Endothelial cell of umbilical vein (primary cell): ENCODE measurements at regions of chr17 and their contacts with region 1.

Region 1: GRCh38 chr17:7219812-7220581 is at the starts of genes ACADVL and DLG4:
- DNase-seq: peak; percentile 85
- H3K4me3 ChIP-seq: peak within 1 kb of the TSS; percentile 51 to 69 (median 61)
- H3K27ac ChIP-seq: peak within 1 kb of the TSS; percentile 71
- H3K4me1 ChIP-seq: peaks cover 29% of the 10 kb centered on the region
- H3K27me3 ChIP-seq: no peaks in the 10 kb centered on the region
- CTCF ChIP-seq: no peak
- POLR2A ChIP-seq: peak; percentile 83
- total RNA-seq, gene ACADVL: 300 and 308 TPM in 2 replicates
- total RNA-seq, gene DLG4: 26.6 and 34.6 TPM in 2 replicates

Region 2: GRCh38 chr17:7035591-7036368 is 184.2 kb before region 1 on chr17 and contains the start of gene SLC16A13:
- CTCF ChIA-PET with region 1: no interaction called
- POLR2A ChIA-PET with region 1: no interaction called
- dilution Hi-C with region 1: no loop called
- intact Hi-C with region 1: no loop called
- DNase-seq: peak; percentile 96
- H3K4me3 ChIP-seq: peak within 1 kb of the TSS; percentile 55 to 76 (median 61)
- H3K27ac ChIP-seq: peak within 1 kb of the TSS; percentile 84
- H3K4me1 ChIP-seq: peaks cover 31% of the 10 kb centered on the region
- H3K27me3 ChIP-seq: no peaks in the 10 kb centered on the region
- CTCF ChIP-seq: no peak
- POLR2A ChIP-seq: no peak
- total RNA-seq, gene SLC16A13: 18.6 and 24.7 TPM in 2 replicates

Region 3: DNA sequence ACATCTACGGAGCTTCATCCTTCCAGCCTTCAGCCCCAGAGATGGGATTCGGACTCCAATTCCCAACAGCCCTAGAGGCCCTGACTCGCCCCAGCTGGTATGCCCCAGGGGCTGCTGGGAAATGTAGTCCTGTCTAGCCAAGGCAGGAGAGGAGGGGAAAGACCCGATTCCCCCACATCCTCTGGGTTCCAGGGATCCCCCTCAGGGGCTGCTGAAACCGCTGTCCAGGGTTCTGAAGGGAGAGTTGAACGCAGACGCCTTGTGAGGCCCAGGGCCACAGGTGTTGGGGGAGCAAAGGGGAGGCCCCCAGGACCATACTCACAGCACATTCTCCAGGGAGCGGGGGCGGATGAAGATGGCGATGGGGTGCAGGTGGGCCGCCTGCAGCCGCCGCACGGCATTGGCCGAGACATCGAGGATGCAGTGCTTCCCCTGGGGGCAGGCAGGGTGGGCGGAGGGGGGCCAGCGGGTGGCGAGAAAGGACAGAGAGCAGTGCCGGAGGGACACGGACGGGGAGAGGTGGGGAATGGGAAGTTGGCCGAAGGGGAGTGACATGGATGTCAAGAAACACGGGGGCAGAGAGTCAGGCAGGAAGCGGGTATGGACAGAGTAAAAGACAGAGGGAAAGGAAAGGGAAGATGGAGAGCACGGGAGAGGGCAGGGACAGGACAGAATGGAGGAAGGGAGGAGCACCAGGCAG is 28.3 kb before region 1 on chr17:
- CTCF ChIA-PET with region 1: no interaction called
- POLR2A ChIA-PET with region 1: no interaction called
- dilution Hi-C with region 1: no loop called
- intact Hi-C with region 1: no loop called
- DNase-seq: no peak
- H3K4me3 ChIP-seq: no peak overlapping the region
- H3K27ac ChIP-seq: no peak overlapping the region
- H3K4me1 ChIP-seq: no peaks in the 10 kb centered on the region
- H3K27me3 ChIP-seq: no peaks in the 10 kb centered on the region
- CTCF ChIP-seq: no peak
- POLR2A ChIP-seq: no peak

Region 4: GRCh38 chr17:7234083-7234951 is 14.3 kb after region 1 on chr17 and contains the start of gene DVL2:
- CTCF ChIA-PET with region 1: interaction called, 34 read pairs
- POLR2A ChIA-PET with region 1: interaction called, 6 read pairs
- dilution Hi-C with region 1: no loop called
- intact Hi-C with region 1: loop called (anchors 1 kb)
- DNase-seq: peak; percentile 96
- H3K4me3 ChIP-seq: peak within 1 kb of the TSS; percentile 43 to 83 (median 55)
- H3K27ac ChIP-seq: peak within 1 kb of the TSS; percentile 29
- H3K4me1 ChIP-seq: peaks cover 12% of the 10 kb centered on the region
- H3K27me3 ChIP-seq: no peaks in the 10 kb centered on the region
- CTCF ChIP-seq: no peak
- POLR2A ChIP-seq: peak; percentile 97
- total RNA-seq, gene DVL2: 52.1 and 55.9 TPM in 2 replicates

Region 5: DNA sequence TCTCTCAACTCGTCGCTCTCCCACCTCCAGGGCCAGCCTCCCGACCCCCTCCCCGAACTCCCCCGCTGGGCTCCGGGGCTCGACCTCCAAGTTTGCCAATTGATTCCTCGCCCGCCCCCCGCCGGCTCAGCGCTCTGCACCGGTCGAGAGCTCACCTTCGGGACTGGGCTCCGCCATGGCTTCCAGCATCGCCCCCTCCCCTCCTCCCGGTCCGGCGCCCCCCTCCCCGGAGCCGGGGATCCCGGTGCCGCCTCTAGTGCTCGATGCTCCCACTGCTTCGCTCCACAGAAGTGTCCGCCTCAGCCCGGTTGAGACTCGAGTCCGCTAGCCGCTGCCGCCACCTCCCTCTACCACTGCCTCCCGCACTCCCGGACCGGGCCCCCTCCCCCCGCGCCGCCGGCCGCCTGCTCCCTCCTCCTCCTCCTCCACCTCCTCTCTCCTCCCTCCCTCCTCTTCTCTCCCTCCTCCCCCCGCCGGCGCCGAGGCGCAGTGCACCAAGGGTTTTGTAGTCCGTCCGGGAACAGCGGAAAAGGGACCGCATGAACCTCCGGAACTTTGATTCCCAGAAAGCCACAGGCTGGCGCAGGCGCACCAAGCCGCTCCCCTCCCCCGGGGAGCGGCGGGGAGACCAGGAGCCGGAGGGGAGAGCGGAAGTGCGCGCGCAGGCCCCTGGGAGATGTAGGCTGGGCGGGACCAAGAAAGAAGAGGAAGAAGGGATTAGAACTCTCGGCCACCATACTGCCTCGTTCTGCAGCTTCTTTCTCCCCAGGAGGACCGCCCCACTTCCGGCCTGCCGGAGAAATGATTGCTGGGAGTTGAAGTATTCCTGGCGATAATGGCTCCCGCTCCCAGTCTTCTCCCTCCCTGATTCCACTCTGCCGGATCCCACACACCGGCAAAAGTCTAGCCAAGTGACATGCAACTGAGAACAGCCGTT is 19.4 kb after region 1 on chr17 and contains the start of gene PHF23:
- CTCF ChIA-PET with region 1: interaction called, 34 read pairs
- POLR2A ChIA-PET with region 1: interaction called, 4 read pairs
- dilution Hi-C with region 1: no loop called
- intact Hi-C with region 1: loop called (anchors 1 kb)
- DNase-seq: peak; percentile 100
- H3K4me3 ChIP-seq: peak within 1 kb of the TSS; percentile 71 to 96 (median 83)
- H3K27ac ChIP-seq: peak within 1 kb of the TSS; percentile 14
- H3K4me1 ChIP-seq: peaks cover 35% of the 10 kb centered on the region
- H3K27me3 ChIP-seq: no peaks in the 10 kb centered on the region
- CTCF ChIP-seq: no peak
- POLR2A ChIP-seq: peak; percentile 51
- total RNA-seq, gene PHF23: 54.7 and 56.2 TPM in 2 replicates

Region 6: DNA sequence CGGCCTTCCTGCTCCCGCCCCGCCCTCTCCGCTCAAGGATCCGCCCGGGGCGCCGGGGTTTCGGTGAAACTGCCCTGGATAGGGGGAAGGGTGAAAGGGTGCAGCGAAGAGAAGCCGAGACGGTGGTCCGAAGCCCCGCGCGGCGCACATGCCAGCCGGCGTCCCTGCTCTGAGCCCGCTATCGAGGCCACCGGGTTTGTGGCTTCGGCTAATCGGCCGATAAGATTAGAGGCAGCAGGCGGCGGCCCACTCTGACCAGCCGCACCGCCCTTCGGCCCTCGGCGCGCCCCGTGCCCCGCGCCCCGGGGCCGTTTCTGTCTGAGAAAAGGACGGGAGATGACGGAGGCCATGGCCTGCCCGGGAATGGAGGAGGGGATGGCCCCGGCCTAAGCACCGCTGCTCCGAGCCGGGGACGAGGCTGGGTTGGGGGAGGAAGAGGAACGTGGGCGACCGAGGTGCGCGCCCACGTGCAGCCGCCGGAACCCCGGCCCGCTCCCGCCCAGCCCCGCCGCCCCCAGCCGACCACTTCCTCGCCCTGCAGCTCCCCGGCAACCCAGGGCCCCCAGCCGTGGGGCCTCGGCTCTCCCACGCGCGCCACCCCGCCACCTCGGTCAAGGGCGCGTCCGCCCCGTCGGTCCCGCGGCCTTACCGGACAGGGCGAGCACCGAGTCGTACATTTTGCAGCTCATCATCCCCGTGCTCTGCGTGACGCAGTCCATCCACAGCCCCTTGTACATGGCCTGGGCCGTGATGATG is 41.4 kb after region 1 on chr17:
- CTCF ChIA-PET with region 1: interaction called, 5 read pairs
- POLR2A ChIA-PET with region 1: interaction called, 4 read pairs
- dilution Hi-C with region 1: no loop called
- intact Hi-C with region 1: loop called (anchors 2 kb)
- DNase-seq: no peak
- H3K4me3 ChIP-seq: peak overlapping the region; percentile 8 to 19 (median 13)
- H3K27ac ChIP-seq: no peak overlapping the region
- H3K4me1 ChIP-seq: peaks cover 26% of the 10 kb centered on the region
- H3K27me3 ChIP-seq: no peaks in the 10 kb centered on the region
- CTCF ChIP-seq: no peak
- POLR2A ChIP-seq: no peak

Region 7: DNA sequence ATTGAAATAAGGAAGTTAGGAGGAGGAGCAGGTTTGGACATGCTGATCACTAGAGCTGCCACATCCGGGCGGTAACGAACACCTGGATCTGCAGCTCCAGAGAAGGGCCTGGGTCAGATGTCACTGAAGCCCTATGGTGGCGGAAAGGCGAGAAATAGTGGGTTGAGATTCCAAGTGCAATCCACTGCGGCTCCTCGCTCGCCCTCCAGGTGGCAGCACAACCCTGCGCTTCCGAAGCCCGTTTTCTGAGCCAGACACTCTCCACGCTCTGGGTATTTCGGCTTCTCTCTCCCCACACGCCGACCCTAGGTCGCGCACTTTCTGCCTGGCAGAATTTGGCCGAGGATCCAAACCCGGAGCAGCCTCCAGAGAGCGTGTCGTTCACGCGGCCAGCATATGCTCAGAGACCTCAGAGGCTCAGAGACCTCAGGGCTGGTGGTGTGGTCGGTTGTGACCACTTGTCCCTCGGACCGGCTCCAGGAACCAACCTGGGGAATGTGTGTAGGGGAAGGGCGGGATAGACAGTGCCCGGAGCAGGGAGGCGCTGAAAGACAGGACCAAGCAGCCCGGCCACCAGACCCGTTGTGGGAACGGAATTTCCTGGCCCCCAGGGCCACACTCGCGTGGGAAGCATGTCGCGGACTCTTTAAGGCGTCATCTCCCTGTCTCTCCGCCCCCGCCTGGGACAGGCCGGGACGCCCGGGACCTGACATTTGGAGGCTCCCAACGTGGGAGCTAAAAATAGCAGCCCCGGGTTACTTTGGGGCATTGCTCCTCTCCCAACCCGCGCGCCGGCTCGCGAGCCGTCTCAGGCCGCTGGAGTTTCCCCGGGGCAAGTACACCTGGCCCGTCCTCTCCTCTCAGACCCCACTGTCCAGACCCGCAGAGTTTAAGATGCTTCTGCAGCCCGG is 60.8 kb after region 1 on chr17:
- CTCF ChIA-PET with region 1: interaction called, 10 read pairs
- POLR2A ChIA-PET with region 1: no interaction called
- dilution Hi-C with region 1: no loop called
- intact Hi-C with region 1: no loop called
- DNase-seq: peak; percentile 77
- H3K4me3 ChIP-seq: peak overlapping the region in 2 of 3 experiments; percentile 13 to 33
- H3K27ac ChIP-seq: no peak overlapping the region
- H3K4me1 ChIP-seq: peaks cover 9% of the 10 kb centered on the region
- H3K27me3 ChIP-seq: peaks cover 4 to 5% of the 10 kb centered on the region in 2 experiments
- CTCF ChIP-seq: peak; percentile 92 to 96
- POLR2A ChIP-seq: no peak

Region 8: DNA sequence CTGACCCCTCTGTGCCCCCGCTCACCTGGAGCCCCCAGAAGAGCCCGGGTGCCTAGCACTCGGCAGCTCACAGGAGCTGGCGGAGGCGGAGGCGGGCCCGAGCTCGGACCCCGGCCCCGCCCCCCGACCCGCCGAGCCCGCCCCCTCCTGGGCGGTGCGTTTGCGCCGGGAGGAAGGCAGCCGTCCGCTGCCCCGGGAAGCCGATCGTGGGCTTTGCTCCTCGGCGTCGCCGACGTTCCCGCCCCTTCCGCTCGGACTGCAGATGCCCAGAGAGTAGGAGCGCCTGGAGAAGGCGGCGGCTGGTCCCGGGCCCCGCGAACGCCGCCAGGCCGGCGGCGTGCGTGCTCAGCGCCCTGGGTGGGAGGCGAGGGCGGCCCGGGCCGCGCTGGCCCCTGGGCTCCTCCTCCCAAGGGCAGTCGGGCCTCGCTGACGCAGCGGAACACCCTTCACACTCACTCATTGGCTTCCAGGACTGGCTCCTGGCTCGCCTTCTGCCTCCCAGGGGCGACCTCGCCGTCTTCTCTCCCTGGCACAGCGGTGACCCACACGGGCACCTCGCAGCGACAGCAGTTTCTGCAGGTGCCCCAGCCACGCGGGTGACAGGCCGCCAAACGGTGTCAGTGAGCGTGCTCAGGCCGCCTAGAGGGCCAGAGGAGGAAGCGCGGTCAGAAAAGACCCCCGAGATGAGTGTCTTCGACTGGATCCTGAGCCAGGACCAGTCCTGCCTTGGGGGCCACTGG is 174.6 kb after region 1 on chr17 and contains the start of gene PLSCR3:
- CTCF ChIA-PET with region 1: no interaction called
- POLR2A ChIA-PET with region 1: no interaction called
- dilution Hi-C with region 1: no loop called
- intact Hi-C with region 1: no loop called
- DNase-seq: peak; percentile 92
- H3K4me3 ChIP-seq: peak within 1 kb of the TSS; percentile 58 to 93 (median 92)
- H3K27ac ChIP-seq: peak within 1 kb of the TSS; percentile 45
- H3K4me1 ChIP-seq: peaks cover 16% of the 10 kb centered on the region
- H3K27me3 ChIP-seq: no peaks in the 10 kb centered on the region
- CTCF ChIP-seq: peak in 1 of 2 donors; percentile 55
- POLR2A ChIP-seq: peak; percentile 90
- total RNA-seq, gene PLSCR3: 54.5 and 59.9 TPM in 2 replicates